ENCODE measurements at regions of chr9 and their contacts with region 1.

Region 1: DNA sequence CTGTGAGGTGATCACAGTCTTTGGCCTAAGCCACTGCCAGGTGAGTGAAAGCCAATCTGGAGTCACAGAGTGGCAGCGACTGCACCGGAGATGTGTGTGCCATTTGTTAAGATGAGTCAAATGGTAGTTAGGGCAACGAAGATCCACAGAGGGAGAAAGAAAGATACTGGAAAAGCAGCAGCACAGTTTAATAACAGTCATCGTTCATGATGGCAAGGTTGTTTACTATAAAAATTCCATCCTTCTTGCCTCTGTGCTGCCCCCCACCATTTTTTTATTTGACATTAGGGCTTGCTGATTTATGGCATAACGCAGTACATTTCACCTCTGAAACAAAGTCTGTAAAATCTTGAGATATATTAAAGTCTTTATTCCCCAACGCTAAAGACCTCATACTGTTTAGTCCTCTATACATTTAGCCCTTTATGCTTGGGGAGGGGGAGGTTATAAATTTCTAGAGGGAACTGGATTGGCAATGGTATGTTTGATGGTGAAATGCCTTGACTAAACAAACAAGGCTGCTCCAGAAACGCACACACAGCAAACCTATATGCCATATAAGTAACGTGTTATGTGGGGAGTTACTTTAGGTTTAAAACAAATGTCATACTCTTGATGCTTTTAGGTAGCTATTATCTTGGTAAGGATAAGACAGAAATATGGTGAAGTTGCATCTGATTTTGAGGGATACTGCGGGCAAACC is 55.8 kb upstream of the ABL1 start:
- H3K4me3 Mint-ChIP-seq: no peak overlapping the region
- H3K27ac Mint-ChIP-seq: no peak overlapping the region
- H3K4me1 Mint-ChIP-seq: peaks cover 28% of the 10 kb centered on the region
- H3K27me3 Mint-ChIP-seq: no peaks in the 10 kb centered on the region

Region 2: DNA sequence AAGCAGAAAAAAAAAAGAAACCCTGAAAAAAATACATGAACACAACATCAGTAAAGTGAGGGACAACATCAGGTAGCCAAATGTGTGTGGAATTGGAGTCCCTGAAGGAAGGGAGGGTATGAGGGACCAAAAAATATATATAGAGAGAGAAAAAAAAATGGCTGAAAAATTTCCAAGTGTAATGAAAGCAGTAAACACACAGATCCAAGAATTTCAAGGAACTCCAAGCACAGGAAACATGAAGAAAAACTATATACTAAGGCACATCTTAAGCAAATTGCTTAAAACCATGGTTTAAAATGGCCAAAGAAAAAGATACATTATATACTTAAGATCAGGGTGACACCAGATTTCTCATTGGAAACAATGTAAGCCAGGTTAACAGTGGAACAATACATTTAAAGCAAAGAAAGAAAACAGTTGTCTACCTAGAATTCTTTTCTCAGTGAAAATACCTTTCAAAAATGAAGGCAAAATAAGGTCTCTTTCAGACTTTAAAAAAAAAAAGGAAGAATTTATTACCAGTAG is 31.4 kb after region 1 on chr9:
- intact Hi-C with region 1: loop called (anchors 5 kb)
- H3K4me3 Mint-ChIP-seq: no peak overlapping the region
- H3K27ac Mint-ChIP-seq: no peak overlapping the region
- H3K4me1 Mint-ChIP-seq: peaks cover 2% of the 10 kb centered on the region
- H3K27me3 Mint-ChIP-seq: no peaks in the 10 kb centered on the region